PC-9 (cell line): ENCODE measurements at regions of chr2 and their contacts with region 1.

Region 1: DNA sequence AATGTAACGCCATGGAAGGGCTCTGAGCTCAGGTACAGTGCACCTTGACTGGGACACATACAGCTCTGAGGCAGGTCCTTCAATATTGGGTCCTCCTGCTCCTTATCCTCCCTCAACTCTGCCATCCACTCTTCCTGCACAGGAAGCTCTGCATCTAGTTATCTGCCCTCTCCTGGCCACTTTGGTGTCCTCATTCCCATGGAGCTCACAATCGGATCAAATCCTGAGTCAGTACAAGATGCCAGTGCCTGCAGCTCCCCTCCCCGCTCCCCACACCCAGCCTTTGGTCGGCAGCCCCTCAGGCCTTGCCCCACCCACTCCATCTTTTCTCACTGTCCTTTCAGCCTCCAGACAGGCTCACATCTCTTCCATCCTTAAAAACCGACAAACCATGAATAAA is 58.0 kb downstream of the LRRFIP1 start:
- DNase-seq: no peak
- H3K4me3 ChIP-seq: no peak overlapping the region
- H3K27ac ChIP-seq: no peak overlapping the region
- H3K4me1 ChIP-seq: peaks cover 57% of the 10 kb centered on the region
- H3K27me3 ChIP-seq: no peaks in the 10 kb centered on the region
- CTCF ChIP-seq: peak; percentile 29; the same call in 1 of the 2 replicates

Region 2: GRCh38 chr2:237483040-237483721 is 202.2 kb before region 1 on chr2:
- CTCF ChIA-PET with region 1: no interaction called
- POLR2A ChIA-PET with region 1: interaction called, 3 read pairs
- intact Hi-C with region 1: loop called (anchors 5 kb)
- DNase-seq: peak; percentile 88 to 98
- H3K4me3 ChIP-seq: no peak overlapping the region
- H3K27ac ChIP-seq: peak overlapping the region; percentile 66
- H3K4me1 ChIP-seq: peaks cover 41% of the 10 kb centered on the region
- H3K27me3 ChIP-seq: no peaks in the 10 kb centered on the region
- CTCF ChIP-seq: peak; percentile 73

Region 3: DNA sequence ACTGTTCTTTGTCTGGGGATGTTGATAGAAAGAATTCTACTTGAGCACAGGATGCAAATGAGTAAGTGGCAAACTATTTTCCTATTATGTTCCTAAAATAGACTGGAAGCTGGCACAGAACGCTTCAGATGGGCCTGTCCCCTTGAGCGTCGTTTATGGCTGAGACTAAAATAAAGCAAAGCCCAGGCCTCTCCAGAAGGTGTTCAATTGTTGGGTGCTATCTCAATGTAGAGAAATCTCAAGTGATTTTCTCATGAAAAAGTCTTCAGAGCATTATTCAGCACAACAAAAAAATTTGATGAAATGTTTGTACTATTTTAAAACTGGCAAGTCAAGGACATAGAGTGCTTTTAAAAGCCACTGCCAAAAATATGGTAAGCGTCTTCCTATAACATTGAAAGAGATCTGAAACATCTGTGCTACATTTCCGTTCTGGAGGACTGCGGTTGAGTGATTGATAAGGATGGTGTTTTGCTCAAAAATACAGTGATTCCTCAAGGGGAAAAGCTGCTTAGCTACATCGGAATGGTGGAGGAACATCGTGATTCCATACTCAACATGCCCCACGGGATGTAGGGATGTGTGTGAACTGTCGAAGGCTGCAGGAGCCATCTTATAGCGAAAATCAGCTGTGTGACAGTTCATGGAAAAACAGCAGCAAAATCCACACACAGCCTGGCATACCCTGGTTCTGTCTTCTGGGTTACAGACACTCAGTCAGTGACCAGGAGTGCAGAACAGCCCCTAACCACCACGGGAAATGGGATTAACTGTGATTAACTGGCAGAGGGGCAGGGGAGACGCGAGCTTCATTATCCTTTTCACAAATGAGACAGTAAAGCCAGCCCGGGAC is 68.4 kb before region 1 on chr2:
- CTCF ChIA-PET with region 1: no interaction called
- POLR2A ChIA-PET with region 1: interaction called, 7 read pairs
- intact Hi-C with region 1: loop called (anchors 1 kb)
- DNase-seq: peak in 1 of 2 experiments; percentile 50
- H3K4me3 ChIP-seq: no peak overlapping the region
- H3K27ac ChIP-seq: no peak overlapping the region
- H3K4me1 ChIP-seq: peaks cover 19% of the 10 kb centered on the region
- H3K27me3 ChIP-seq: no peaks in the 10 kb centered on the region
- CTCF ChIP-seq: no peak

Region 4: DNA sequence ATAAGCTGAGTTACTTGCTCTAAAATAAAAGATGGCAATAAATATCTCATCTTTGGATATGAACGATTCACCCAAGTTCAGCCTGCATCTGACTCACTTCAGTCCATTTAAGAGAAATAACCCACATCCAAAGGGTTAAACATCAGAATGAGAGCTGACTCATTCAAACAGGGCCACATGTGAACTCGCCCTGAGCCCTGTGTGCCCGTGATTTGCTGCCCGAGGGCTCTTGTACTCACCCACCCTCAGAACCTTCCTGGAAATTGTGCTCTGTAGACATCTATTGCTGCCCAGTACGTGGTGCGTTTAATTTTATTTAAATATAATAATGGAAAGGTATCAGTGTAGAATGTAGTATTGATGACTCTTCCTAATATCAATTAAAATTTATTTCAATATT is 46.3 kb after region 1 on chr2:
- CTCF ChIA-PET with region 1: interaction called, 12 read pairs
- POLR2A ChIA-PET with region 1: no interaction called
- intact Hi-C with region 1: no loop called
- DNase-seq: peak; percentile 69 to 77
- H3K4me3 ChIP-seq: no peak overlapping the region
- H3K27ac ChIP-seq: peak overlapping the region; percentile 6; the same call in 1 of the 2 replicates
- H3K4me1 ChIP-seq: peaks cover 31% of the 10 kb centered on the region
- H3K27me3 ChIP-seq: no peaks in the 10 kb centered on the region
- CTCF ChIP-seq: no peak